Activated CD4-positive, alpha-beta T cell treated with anti-CD3 and anti-CD28 coated beads for 36 hours (primary cell): ENCODE measurements at regions of chr12 and their contacts with region 1.

Region 1: DNA sequence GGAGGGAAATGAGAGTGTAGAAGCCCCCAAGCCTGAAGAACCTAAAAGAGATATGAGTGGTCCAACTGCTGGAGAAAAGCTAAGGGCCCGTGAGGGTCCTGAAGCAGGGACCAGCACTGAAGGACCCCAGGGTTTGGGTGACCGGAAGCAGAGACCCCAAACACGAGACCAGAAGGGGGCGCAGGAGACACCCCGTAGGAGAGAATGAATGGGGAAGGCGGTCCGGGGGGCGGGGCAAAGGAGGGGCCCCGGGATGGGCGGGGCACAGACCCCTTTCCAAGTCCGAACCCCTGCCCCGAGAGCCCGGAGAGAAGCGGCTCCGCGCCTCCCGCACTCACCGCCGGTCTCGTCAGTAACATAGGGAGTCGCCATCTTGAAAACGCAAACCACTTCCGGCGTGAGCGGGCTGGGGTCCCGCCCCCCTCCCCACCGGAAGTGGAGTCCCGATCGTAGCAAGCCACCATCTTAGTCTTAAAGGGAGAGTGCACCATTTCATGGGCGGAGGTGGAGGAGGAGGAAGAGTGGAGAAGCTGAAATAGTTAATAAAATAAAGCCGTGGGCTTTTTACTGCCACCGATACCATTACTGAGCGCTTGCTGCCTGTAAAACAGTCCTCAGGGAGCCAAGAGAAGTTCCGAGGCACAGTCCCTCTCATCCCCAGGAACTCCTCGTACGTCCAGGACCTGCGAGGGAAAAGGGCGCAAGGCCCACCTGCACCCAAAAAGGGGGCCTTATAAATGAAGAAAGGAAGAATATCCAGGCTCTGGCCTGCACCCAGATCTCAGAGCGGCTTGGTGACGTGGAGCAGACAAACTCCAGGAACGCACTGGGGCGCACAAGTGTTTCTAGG is 731 bp downstream of the PYM1 start:
- DNase-seq: peak; percentile 97
- ATAC-seq: peak; percentile 40
- H3K4me3 Mint-ChIP-seq: peak overlapping the region; percentile 100
- H3K27ac Mint-ChIP-seq: peak overlapping the region; percentile 95
- H3K4me1 Mint-ChIP-seq: peaks cover 48% of the 10 kb centered on the region
- H3K27me3 Mint-ChIP-seq: no peaks in the 10 kb centered on the region

Region 2: DNA sequence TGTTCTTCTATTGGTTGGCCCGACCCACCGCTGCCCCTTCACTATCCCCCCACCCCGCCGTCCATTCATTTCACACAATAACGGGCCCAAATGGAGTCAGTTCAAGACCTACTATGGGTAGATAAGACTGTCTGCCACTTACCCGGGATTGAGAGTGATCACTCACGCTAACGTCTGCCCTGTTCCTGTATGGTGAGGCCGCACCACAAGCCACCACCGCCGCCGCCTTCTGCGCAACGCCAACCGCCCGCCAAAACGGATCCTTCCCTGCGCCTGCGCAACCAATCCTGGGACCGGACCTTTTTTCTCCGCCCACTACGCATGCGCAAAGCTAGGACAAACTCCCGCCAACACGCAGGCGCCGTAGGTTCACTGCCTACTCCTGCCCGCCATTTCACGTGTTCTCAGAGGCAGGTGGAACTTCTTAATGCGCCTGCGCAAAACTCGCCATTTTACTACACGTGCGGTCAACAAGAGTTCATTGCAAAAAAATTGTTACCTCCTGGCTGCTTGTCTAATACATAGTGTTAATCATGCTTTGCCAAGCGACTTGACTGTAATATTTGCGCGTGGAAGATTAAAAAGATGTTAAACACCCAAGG is 1647.0 kb before region 1 on chr12 and contains the start of gene CBX5:
- CTCF ChIA-PET with region 1: no interaction called
- POLR2A ChIA-PET with region 1: no interaction called
- intact Hi-C with region 1: loop called in 1 of 2 experiments (anchors 2 kb)
- DNase-seq: peak; percentile 100
- ATAC-seq: peak; percentile 50
- H3K4me3 Mint-ChIP-seq: no peak within 1 kb of the TSS
- H3K27ac Mint-ChIP-seq: no peak within 1 kb of the TSS
- H3K4me1 Mint-ChIP-seq: peaks cover 52% of the 10 kb centered on the region
- H3K27me3 Mint-ChIP-seq: no peaks in the 10 kb centered on the region
- total RNA-seq, gene CBX5: 140 to 146 TPM

Region 3: DNA sequence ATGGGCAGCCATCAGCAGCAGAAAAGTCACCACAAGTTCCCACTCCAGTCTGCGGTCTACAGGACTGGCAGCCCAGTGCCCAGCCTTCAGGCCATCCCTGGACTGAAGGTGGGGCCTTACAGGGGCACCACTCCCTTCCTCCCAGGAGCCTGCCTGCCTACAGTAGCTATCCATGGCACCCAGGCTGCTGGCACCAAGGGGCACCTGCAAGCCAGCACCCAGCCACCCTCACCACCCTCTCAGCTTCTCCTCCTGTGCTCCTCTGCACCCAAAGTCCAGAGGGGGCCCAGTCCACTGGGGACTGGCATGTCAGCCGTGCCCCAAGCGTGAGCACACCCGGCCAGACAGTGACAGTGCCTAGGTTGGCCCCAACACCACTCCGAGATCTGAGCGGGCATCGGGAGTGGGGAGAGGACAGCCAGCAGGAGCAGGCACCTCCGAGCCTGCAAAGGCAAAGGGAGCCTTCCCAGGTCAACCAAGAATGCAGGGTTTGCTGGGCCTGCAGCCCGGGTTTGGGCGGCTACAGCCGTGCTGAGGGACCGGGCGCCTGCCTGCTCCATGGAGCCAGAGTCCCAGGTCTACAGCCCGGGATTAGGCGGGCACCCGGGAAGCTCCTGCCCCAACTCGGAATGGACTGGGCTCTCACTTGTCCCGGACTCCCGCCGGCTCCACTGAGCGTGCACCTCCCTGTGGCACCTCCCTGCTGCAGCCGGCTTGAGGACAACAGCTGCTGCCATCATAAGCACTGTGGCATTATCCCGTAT is 534.7 kb before region 1 on chr12:
- CTCF ChIA-PET with region 1: no interaction called
- POLR2A ChIA-PET with region 1: no interaction called
- intact Hi-C with region 1: no loop called
- DNase-seq: no peak
- ATAC-seq: no peak
- H3K4me3 Mint-ChIP-seq: no peak overlapping the region
- H3K27ac Mint-ChIP-seq: no peak overlapping the region
- H3K4me1 Mint-ChIP-seq: no peaks in the 10 kb centered on the region
- H3K27me3 Mint-ChIP-seq: peaks cover 4% of the 10 kb centered on the region

Region 4: DNA sequence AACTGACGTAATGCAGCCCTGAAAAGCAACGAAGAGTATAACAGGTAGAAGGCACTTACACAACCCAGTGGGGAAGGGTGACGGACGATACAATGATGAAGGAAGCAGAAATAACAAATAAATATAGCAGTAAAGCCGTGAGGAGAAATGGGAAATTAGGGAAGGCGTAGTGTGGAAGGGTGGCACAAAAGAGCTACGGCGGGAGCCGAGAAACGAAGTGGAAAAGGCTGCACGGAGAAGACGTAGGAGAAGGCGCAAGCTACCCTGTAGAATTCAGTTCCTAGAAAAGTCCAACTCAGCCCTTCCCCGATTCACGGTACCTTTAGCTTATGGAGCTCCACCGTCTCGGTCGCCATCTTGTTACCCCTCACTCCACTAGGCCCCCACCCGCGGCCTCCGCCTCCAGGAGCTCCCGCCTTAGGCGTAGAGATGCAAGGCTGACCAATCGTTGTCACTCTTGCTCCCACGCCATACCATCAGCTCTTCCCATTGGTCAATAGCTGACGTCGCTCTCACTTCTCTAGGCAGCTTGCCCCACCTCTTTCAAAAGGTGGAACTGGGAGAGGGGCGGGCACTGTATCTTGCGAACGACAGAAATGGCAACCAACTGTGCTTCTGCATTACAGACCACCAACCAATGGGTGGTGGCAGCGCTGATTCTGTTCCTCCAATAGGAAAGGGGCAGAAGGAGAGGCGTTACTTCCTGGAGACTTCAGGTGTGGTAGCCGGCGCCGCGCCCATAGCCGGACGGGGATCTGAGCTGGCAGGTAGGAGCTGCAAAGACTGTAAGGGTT is 109.4 kb before region 1 on chr12 and contains the starts of genes ORMDL2 and SARNP:
- CTCF ChIA-PET with region 1: interaction called, 9 read pairs
- POLR2A ChIA-PET with region 1: interaction called, 7 read pairs
- intact Hi-C with region 1: loop called (anchors 1 kb)
- DNase-seq: peak; percentile 97
- ATAC-seq: peak; percentile 98
- H3K4me3 Mint-ChIP-seq: no peak within 1 kb of the TSS
- H3K27ac Mint-ChIP-seq: no peak within 1 kb of the TSS
- H3K4me1 Mint-ChIP-seq: peaks cover 49% of the 10 kb centered on the region
- H3K27me3 Mint-ChIP-seq: no peaks in the 10 kb centered on the region
- total RNA-seq, gene ORMDL2: 29.4 to 35.6 TPM
- total RNA-seq, gene SARNP: 111 to 114 TPM

Region 5: DNA sequence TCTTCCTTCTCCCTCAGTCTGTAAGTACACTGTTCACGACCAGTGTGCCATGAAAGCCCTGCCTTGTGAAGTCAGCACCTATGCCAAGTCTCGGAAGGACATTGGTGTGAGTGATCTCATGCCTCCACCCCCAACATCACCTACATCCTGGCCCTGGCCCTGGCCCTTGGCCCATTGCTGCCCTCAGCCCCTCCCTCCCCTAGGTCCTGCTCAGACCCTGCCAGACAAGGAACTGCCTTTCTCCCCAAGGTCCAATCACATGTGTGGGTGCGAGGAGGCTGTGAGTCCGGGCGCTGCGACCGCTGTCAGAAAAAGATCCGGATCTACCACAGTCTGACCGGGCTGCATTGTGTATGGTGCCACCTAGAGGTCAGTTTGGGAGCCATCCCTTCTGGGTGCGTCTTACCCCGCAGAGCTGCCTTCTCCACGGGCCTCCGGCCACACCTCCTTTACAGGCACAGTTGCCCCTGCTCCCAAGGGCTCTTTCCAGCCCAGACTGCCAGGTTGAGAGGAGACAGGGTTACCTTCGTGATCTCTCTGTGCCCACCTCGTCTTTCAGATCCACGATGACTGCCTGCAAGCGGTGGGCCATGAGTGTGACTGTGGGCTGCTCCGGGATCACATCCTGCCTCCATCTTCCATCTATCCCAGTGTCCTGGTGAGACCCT is 13.2 kb after region 1 on chr12:
- CTCF ChIA-PET with region 1: interaction called, 32 read pairs
- POLR2A ChIA-PET with region 1: no interaction called
- intact Hi-C with region 1: loop called (anchors 1 kb)
- DNase-seq: peak; percentile 90
- ATAC-seq: peak; percentile 77
- H3K4me3 Mint-ChIP-seq: peak overlapping the region; percentile 1
- H3K27ac Mint-ChIP-seq: peak overlapping the region; percentile 58
- H3K4me1 Mint-ChIP-seq: peaks cover 75% of the 10 kb centered on the region
- H3K27me3 Mint-ChIP-seq: no peaks in the 10 kb centered on the region

Region 6: DNA sequence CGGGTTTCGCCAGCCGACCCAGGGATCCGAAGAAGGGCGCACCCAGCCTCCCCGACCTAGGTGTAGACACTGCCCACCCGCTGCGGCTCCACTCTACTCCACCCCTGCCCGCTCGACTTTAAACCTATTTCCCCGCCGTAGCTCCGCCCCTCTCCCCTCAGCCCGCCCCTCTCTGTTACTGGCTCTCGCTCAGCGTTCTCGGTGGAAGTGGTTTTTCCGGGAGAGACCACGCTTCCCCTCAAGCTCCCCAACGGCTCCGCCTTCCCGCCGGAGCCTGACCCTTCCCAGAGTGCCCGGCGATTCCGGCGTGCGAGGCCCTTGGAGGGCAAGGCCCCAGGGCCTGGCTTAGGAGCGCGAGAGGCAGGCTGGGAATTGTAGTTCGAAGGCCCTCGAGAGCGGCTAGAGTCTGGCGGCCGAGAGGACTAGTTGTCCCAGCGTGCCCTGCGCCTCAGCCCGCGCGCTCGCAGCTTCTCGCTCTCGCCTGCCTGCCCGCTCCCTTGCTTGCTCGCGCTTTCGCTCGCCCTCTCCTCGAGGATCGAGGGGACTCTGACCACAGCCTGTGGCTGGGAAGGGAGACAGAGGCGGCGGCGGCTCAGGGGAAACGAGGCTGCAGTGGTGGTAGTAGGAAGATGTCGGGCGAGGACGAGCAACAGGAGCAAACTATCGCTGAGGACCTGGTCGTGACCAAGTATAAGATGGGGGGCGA is 177.3 kb after region 1 on chr12 and contains the start of gene PA2G4:
- CTCF ChIA-PET with region 1: interaction called, 3 read pairs
- POLR2A ChIA-PET with region 1: no interaction called
- intact Hi-C with region 1: loop called (anchors 1 to 5 kb)
- DNase-seq: peak; percentile 99
- ATAC-seq: peak; percentile 95
- H3K4me3 Mint-ChIP-seq: peak within 1 kb of the TSS; percentile 100
- H3K27ac Mint-ChIP-seq: peak within 1 kb of the TSS; percentile 100
- H3K4me1 Mint-ChIP-seq: peaks cover 43% of the 10 kb centered on the region
- H3K27me3 Mint-ChIP-seq: no peaks in the 10 kb centered on the region
- total RNA-seq, gene PA2G4: 446 to 695 TPM

Region 7: GRCh38 chr12:56468216-56469006 is 541.4 kb after region 1 on chr12 and contains the start of gene SPRYD4:
- CTCF ChIA-PET with region 1: no interaction called
- POLR2A ChIA-PET with region 1: no interaction called
- intact Hi-C with region 1: loop called in 1 of 2 experiments (anchors 1 kb)
- DNase-seq: peak; percentile 96
- ATAC-seq: peak; percentile 90
- H3K4me3 Mint-ChIP-seq: peak within 1 kb of the TSS; percentile 91
- H3K27ac Mint-ChIP-seq: peak within 1 kb of the TSS; percentile 99
- H3K4me1 Mint-ChIP-seq: peaks cover 40% of the 10 kb centered on the region
- H3K27me3 Mint-ChIP-seq: no peaks in the 10 kb centered on the region
- total RNA-seq, gene SPRYD4: 3.1 TPM

Region 8: DNA sequence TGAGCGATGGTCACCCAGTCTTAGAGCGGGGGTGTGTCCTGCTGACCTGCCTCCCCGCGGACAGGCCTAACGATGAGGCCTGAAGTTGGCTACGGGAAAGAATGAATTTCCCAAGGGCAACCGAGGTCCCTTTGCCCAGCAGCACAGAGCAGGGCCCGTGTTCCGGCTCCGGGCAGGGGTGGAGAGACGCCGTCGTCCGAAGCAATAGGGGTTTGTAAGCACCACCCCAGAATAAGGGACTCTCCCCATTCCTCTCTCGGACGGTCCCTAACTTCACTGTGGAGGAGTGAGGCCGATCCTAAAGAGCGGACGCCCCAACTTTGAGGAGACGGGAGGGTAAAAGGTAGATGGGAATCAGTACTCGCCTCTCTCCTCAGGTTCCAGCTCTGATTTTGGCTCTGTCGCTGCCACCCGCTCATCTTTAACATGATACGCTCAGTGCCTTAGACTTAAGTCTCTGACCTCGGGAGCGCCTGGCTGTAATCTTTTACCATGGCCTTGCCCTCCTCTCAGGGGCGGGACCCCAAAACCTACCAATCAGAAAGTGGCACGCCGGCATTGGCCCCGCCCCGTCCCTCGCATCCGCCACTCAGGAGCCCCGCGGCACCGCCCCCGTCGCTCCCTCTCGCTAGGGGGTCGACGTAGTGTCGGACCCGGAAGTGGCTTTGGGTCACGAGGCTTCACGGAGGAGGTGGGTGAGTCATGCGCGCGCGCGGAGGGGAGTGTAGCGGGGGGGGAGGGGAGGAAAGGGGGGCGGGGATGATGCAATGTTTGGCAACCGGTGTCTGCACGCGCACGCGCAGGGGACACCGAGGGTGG is 1593.3 kb after region 1 on chr12 and contains the start of gene DDIT3:
- CTCF ChIA-PET with region 1: no interaction called
- POLR2A ChIA-PET with region 1: no interaction called
- intact Hi-C with region 1: loop called in 1 of 2 experiments (anchors 2 kb)
- DNase-seq: peak; percentile 100
- ATAC-seq: peak; percentile 76
- H3K4me3 Mint-ChIP-seq: peak within 1 kb of the TSS; percentile 96
- H3K27ac Mint-ChIP-seq: peak within 1 kb of the TSS; percentile 99
- H3K4me1 Mint-ChIP-seq: peaks cover 53% of the 10 kb centered on the region
- H3K27me3 Mint-ChIP-seq: no peaks in the 10 kb centered on the region
- total RNA-seq, gene DDIT3: 31.2 to 32.2 TPM